HCT116 (cell line): ENCODE measurements at regions of chr11 and their contacts with region 1.

Region 1: DNA sequence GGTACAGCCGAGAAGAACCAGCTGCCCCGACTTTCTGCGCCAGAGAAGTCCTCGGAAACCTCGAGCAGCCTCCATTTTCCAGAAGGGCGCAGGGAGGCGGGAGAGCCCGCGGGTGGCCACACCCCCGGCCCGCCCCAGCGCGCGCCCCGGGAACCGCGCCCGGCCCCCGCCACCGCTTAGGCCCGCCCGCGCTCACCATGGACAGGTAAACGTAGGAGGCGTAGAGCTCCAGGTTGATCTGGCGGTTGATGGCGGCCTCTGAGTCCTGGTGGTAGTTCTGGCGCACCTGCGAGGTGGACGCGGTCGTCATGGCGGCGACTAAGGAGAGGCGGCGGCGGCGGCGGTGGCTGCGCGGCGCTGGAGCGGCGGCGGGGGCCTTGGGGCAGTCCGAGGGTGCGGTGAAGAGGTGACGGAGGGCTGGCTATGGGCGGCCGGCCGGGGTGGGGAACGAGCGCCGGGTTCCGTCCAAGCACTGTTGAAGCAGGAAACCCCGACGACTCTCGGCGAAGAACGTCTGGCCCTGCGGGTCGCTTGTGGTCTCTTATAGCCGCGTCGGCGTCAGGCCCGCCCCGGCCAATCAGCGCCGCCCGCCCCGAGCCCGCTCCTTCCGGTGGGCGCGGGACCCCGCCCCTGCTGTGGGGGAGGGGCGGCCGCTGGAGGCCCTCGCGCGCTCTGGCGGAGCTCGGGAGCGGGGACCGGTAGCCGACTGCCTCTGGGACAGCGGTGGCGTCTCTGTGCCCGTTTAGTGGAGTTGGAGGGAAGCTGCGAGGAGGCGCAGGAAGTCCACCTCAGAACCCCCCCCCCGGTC is at the start of gene FTH1:
- DNase-seq: peak; percentile 71
- ATAC-seq: peak; percentile 73
- H3K4me3 ChIP-seq: peak within 1 kb of the TSS; percentile 73 to 99
- H3K27ac ChIP-seq: peak within 1 kb of the TSS; percentile 96
- H3K4me1 ChIP-seq: peaks cover 40 to 78% of the 10 kb centered on the region in 2 experiments
- H3K27me3 ChIP-seq: no peaks in the 10 kb centered on the region
- CTCF ChIP-seq: no peak
- POLR2A ChIP-seq: peak; percentile 84
- RAD21 ChIP-seq: no peak
- total RNA-seq, gene FTH1: 3,345 TPM

Region 2: GRCh38 chr11:61908730-61909315 is 58.5 kb before region 1 on chr11:
- CTCF ChIA-PET with region 1: no interaction called
- POLR2A ChIA-PET with region 1: no interaction called
- RAD21 ChIA-PET with region 1: no interaction called
- intact Hi-C with region 1: no loop called
- DNase-seq: no peak
- ATAC-seq: no peak
- H3K4me3 ChIP-seq: no peak overlapping the region
- H3K27ac ChIP-seq: no peak overlapping the region
- H3K4me1 ChIP-seq: no peaks in the 10 kb centered on the region
- H3K27me3 ChIP-seq: no peaks in the 10 kb centered on the region
- CTCF ChIP-seq: no peak
- POLR2A ChIP-seq: no peak
- RAD21 ChIP-seq: no peak

Region 3: GRCh38 chr11:61978703-61979661 is 11.7 kb after region 1 on chr11:
- CTCF ChIA-PET with region 1: no interaction called
- POLR2A ChIA-PET with region 1: interaction called, 25 read pairs
- RAD21 ChIA-PET with region 1: no interaction called
- intact Hi-C with region 1: no loop called
- DNase-seq: no peak
- ATAC-seq: no peak
- H3K4me3 ChIP-seq: no peak overlapping the region
- H3K27ac ChIP-seq: no peak overlapping the region
- H3K4me1 ChIP-seq: peaks cover 5 to 7% of the 10 kb centered on the region in 2 experiments; a peak in 3 of 4 replicates
- H3K27me3 ChIP-seq: no peaks in the 10 kb centered on the region
- CTCF ChIP-seq: no peak
- POLR2A ChIP-seq: no peak
- RAD21 ChIP-seq: no peak

Region 4: GRCh38 chr11:62033191-62034044 is 66.1 kb after region 1 on chr11:
- CTCF ChIA-PET with region 1: no interaction called
- POLR2A ChIA-PET with region 1: interaction called, 11 read pairs
- RAD21 ChIA-PET with region 1: no interaction called
- intact Hi-C with region 1: no loop called
- DNase-seq: peak; percentile 59
- ATAC-seq: peak; percentile 81
- H3K4me3 ChIP-seq: 0 out of 4 replicates have a peak overlapping the region, but pooled peaks of 1 of the 2 experiments have one; percentile 4
- H3K27ac ChIP-seq: no peak overlapping the region; the same call in 1 of the 2 replicates
- H3K4me1 ChIP-seq: peaks cover 0 to 36% of the 10 kb centered on the region in 2 experiments; a peak in 2 of 4 replicates
- H3K27me3 ChIP-seq: no peaks in the 10 kb centered on the region
- CTCF ChIP-seq: no peak
- POLR2A ChIP-seq: no peak
- RAD21 ChIP-seq: peak; percentile 29; the same call in 1 of the 2 replicates

Region 5: GRCh38 chr11:62048065-62048464 is 80.7 kb after region 1 on chr11:
- CTCF ChIA-PET with region 1: no interaction called
- POLR2A ChIA-PET with region 1: interaction called, 86 read pairs
- RAD21 ChIA-PET with region 1: interaction called in 1 of 2 experiments, 3 read pairs
- intact Hi-C with region 1: loop called (anchors 2 kb)
- DNase-seq: no peak
- ATAC-seq: no peak
- H3K4me3 ChIP-seq: no peak overlapping the region
- H3K27ac ChIP-seq: no peak overlapping the region
- H3K4me1 ChIP-seq: peaks cover 56 to 69% of the 10 kb centered on the region in 2 experiments
- H3K27me3 ChIP-seq: no peaks in the 10 kb centered on the region
- CTCF ChIP-seq: no peak
- POLR2A ChIP-seq: no peak
- RAD21 ChIP-seq: no peak

Region 6: GRCh38 chr11:62054484-62055121 is 87.3 kb after region 1 on chr11:
- CTCF ChIA-PET with region 1: interaction called, 4 read pairs
- POLR2A ChIA-PET with region 1: interaction called, 77 read pairs
- RAD21 ChIA-PET with region 1: interaction called in 1 of 2 experiments, 3 read pairs
- intact Hi-C with region 1: loop called (anchors 1 kb)
- DNase-seq: peak; percentile 87
- ATAC-seq: peak; percentile 98
- H3K4me3 ChIP-seq: no peak overlapping the region
- H3K27ac ChIP-seq: no peak overlapping the region
- H3K4me1 ChIP-seq: peaks cover 13 to 19% of the 10 kb centered on the region in 2 experiments; a peak in 3 of 4 replicates
- H3K27me3 ChIP-seq: no peaks in the 10 kb centered on the region
- CTCF ChIP-seq: peak; percentile 79 to 95 (median 80)
- POLR2A ChIP-seq: no peak
- RAD21 ChIP-seq: peak; percentile 99